ENCODE measurements at regions of chr4 and their contacts with region 1.

Region 1: GRCh38 chr4:2977211-2978088 is 14.1 kb downstream of the GRK4 start:
- DNase-seq: no peak
- H3K4me3 Mint-ChIP-seq: no peak overlapping the region
- H3K27ac Mint-ChIP-seq: no peak overlapping the region
- H3K4me1 Mint-ChIP-seq: no peaks in the 10 kb centered on the region
- H3K27me3 Mint-ChIP-seq: peaks cover 5% of the 10 kb centered on the region

Region 2: DNA sequence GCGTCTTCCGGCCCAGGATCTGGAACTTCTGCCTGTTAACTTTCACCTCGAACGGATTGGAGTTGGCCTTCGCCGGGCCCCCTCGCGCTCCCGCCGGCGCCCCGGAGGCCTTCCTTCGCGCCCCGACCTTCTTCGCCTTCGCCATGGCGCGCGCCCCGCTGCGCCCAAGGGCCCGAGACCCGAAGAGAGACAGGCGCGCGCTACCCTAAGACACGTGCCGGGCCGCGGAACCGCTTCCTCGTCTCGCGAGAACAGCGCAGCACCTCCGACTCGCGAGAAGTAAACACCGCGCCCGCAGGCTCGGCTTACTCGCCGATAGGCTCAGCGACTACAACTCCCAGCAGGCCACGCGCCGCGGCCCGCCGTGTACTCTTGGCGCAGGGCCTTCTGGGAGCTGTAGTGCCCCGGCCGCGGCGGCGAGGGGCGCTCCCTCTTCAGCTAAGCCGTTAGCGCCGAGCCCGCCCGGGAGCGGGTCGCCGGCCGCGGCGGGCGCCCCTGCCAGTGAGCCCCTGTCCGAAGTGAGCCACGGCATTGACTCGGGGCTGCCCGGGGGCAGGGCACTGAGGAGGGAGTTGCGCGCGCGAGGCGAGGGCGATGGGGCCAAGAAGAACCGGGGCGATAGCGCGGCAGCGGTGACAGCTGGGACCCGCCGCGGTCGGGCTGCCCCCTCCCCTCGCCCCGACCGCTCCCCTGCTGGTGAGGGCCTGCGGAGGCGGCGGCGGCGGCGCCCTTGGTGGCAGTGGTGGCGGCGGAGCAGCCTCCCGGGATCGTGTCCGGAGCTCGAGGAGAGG is 14.1 kb before region 1 on chr4 and contains the starts of genes GRK4 and NOP14:
- CTCF ChIA-PET with region 1: interaction called, 38 read pairs
- POLR2A ChIA-PET with region 1: interaction called, 3 read pairs
- DNase-seq: peak; percentile 98
- H3K4me3 Mint-ChIP-seq: peak within 1 kb of the TSS; percentile 73
- H3K27ac Mint-ChIP-seq: peak within 1 kb of the TSS; percentile 67
- H3K4me1 Mint-ChIP-seq: peaks cover 39% of the 10 kb centered on the region
- H3K27me3 Mint-ChIP-seq: peaks cover 4% of the 10 kb centered on the region
- total RNA-seq, gene GRK4: 3.1 to 3.6 TPM
- total RNA-seq, gene NOP14: 34.1 to 38.7 TPM

Region 3: GRCh38 chr4:3013839-3014350 is 36.4 kb after region 1 on chr4:
- CTCF ChIA-PET with region 1: interaction called, 10 read pairs
- POLR2A ChIA-PET with region 1: no interaction called
- DNase-seq: no peak
- H3K4me3 Mint-ChIP-seq: no peak overlapping the region
- H3K27ac Mint-ChIP-seq: no peak overlapping the region
- H3K4me1 Mint-ChIP-seq: peaks cover 18% of the 10 kb centered on the region
- H3K27me3 Mint-ChIP-seq: peaks cover 5% of the 10 kb centered on the region